Esophagus muscularis mucosa (tissue), 4 donors: ENCODE measurements at regions of chr9 and their contacts with region 1.

Region 1: DNA sequence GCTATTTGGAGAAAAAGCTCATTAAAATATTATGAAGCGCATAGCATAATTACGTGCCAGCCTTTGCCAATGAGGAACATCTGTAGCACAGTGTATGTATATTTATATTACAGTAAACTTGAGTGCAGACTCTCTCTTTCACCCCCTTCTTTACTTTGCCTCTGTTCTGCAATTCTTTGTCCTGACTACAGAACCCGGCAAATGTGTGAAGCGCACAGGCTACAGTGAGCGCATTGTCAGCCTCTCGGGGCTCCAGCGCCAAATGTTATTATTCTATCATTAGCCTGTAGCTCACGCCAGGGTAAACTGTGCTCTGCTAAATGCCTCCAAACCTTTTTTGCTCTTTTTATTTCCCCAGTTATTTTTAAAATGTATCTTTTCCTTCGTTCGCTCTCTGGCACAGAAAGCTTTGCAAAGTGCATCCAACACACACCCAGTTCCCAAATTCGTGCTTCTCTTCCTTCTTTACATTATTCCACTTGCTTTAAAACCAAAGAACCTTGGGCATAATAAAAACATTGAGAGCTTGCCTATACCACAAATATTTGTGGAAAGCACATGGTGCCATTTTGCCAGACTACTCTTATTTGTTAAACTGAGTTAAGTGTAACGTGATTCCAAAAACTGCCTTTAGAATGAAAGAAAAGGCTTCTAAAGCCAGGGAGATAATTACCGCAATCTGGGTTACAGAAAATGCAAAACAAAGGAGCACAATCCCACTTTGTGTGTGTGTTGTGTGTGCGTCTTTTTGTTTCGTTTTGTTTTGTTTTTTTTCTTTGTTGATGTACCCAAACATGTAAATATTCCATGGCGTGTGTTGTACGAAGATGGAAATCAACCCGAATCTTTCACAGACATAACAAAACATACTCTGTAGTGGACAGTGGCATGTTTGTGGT is 164.1 kb upstream of the MPDZ start:
- DNase-seq: no peak
- H3K4me3 ChIP-seq: peak overlapping the region; percentile 17 to 40 (median 28)
- H3K27ac ChIP-seq: peak overlapping the region in 1 of 4 donors; percentile 11
- H3K4me1 ChIP-seq: peaks cover 6 to 23% (median 14%) of the 10 kb centered on the region in 4 donors
- H3K27me3 ChIP-seq: no peaks in the 10 kb centered on the region
- CTCF ChIP-seq: no peak
- EP300 ChIP-seq: no peak
- POLR2A ChIP-seq: no peak

Region 2: DNA sequence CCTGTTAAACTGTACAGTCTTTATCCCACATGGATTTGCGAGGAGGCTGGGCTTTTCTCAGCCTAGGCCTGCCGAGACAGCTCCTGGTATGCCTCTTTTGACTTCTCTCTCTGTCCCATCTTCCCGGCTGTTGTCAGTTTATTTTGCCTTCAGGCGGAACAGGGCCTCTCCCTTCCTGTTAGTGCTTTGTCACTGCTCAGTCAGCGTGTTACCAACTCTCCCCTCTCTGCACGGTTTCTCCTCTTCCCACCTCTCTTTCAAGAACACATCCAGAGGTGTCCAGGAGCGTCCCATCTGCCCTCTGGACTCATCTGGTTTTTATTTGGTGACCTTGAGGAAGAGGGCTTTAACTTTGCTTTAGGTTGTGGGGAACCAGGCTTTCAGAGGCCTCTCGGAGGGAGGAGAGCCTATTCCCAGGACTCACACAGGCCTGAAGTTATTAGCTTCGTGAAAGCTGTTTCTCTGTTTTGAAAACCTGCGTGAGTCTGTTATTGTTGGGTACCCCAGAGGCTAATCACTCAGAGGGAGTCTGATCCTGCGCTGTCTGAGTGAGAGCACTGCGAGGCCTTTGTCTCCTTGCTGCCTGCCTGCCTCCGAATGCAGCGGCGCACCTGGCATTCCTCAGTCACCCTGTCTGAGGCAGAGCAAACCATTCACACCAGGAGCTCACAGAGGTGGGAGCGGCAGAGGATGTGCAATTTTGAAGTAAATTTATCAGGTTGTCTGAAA is 70.3 kb after region 1 on chr9:
- intact Hi-C with region 1: no loop called
- DNase-seq: no peak
- H3K4me3 ChIP-seq: no peak overlapping the region
- H3K27ac ChIP-seq: peak overlapping the region; percentile 2 to 46 (median 37)
- H3K4me1 ChIP-seq: peaks cover 0 to 14% (median 8%) of the 10 kb centered on the region in 4 donors
- H3K27me3 ChIP-seq: no peaks in the 10 kb centered on the region
- CTCF ChIP-seq: no peak
- EP300 ChIP-seq: no peak
- POLR2A ChIP-seq: no peak

Region 3: GRCh38 chr9:13570068-13570974 is 126.7 kb after region 1 on chr9:
- intact Hi-C with region 1: no loop called
- DNase-seq: no peak
- H3K4me3 ChIP-seq: no peak overlapping the region
- H3K27ac ChIP-seq: peak overlapping the region; percentile 48 to 75 (median 71)
- H3K4me1 ChIP-seq: peaks cover 17 to 29% (median 21%) of the 10 kb centered on the region in 4 donors
- H3K27me3 ChIP-seq: no peaks in the 10 kb centered on the region
- CTCF ChIP-seq: no peak
- EP300 ChIP-seq: no peak
- POLR2A ChIP-seq: no peak

Region 4: GRCh38 chr9:13688994-13689600 is 245.5 kb after region 1 on chr9:
- intact Hi-C with region 1: loop called (anchors 5 kb)
- DNase-seq: no peak
- H3K4me3 ChIP-seq: no peak overlapping the region
- H3K27ac ChIP-seq: no peak overlapping the region
- H3K4me1 ChIP-seq: peaks cover 5 to 18% (median 10%) of the 10 kb centered on the region in 4 donors
- H3K27me3 ChIP-seq: no peaks in the 10 kb centered on the region
- CTCF ChIP-seq: peak; percentile 31 to 58 (median 40)
- EP300 ChIP-seq: no peak
- POLR2A ChIP-seq: no peak